ENCODE measurements at regions of chr3 and their contacts with region 1.

Region 1: GRCh38 chr3:33798411-33799201 is at the start of gene PDCD6IP:
- DNase-seq: peak; percentile 87 to 92 (median 89)
- H3K4me3 ChIP-seq: peak within 1 kb of the TSS; percentile 85 to 92
- H3K4me3 Mint-ChIP-seq: peak within 1 kb of the TSS; percentile 97 to 100 (median 99)
- H3K27ac ChIP-seq: peak within 1 kb of the TSS; percentile 82
- H3K27ac Mint-ChIP-seq: peak within 1 kb of the TSS; percentile 86 to 99 (median 98)
- H3K4me1 ChIP-seq: peaks cover 58% of the 10 kb centered on the region
- H3K4me1 Mint-ChIP-seq: peaks cover 33 to 67% (median 54%) of the 10 kb centered on the region in 4 donors
- H3K27me3 ChIP-seq: no peaks in the 10 kb centered on the region
- H3K27me3 Mint-ChIP-seq: no peaks in the 10 kb centered on the region
- total RNA-seq, gene PDCD6IP: 222 to 237 TPM

Region 2: GRCh38 chr3:33113772-33114621 is 684.6 kb before region 1 on chr3 and contains the start of gene CRTAP:
- CTCF ChIA-PET with region 1: no interaction called
- POLR2A ChIA-PET with region 1: no interaction called
- intact Hi-C with region 1: loop called (anchors 5 kb)
- DNase-seq: peak; percentile 85 to 88 (median 87)
- H3K4me3 ChIP-seq: peak within 1 kb of the TSS; percentile 71 to 83
- H3K4me3 Mint-ChIP-seq: peak within 1 kb of the TSS; percentile 83 to 92 (median 89)
- H3K27ac ChIP-seq: peak within 1 kb of the TSS; percentile 55
- H3K27ac Mint-ChIP-seq: peak within 1 kb of the TSS; percentile 75 to 94 (median 91)
- H3K4me1 ChIP-seq: peaks cover 42% of the 10 kb centered on the region
- H3K4me1 Mint-ChIP-seq: peaks cover 32 to 65% (median 48%) of the 10 kb centered on the region in 4 donors
- H3K27me3 ChIP-seq: no peaks in the 10 kb centered on the region
- H3K27me3 Mint-ChIP-seq: no peaks in the 10 kb centered on the region
- total RNA-seq, gene CRTAP: 75.4 to 84.4 TPM

Region 3: GRCh38 chr3:33544126-33544525 is 254.5 kb before region 1 on chr3:
- CTCF ChIA-PET with region 1: no interaction called
- POLR2A ChIA-PET with region 1: no interaction called
- intact Hi-C with region 1: no loop called
- DNase-seq: no peak
- H3K4me3 ChIP-seq: no peak overlapping the region
- H3K4me3 Mint-ChIP-seq: no peak overlapping the region
- H3K27ac ChIP-seq: no peak overlapping the region
- H3K27ac Mint-ChIP-seq: no peak overlapping the region
- H3K4me1 ChIP-seq: no peaks in the 10 kb centered on the region
- H3K4me1 Mint-ChIP-seq: no peaks in the 10 kb centered on the region
- H3K27me3 ChIP-seq: no peaks in the 10 kb centered on the region
- H3K27me3 Mint-ChIP-seq: no peaks in the 10 kb centered on the region

Region 4: GRCh38 chr3:33636125-33636850 is 162.3 kb before region 1 on chr3:
- CTCF ChIA-PET with region 1: no interaction called
- POLR2A ChIA-PET with region 1: no interaction called
- intact Hi-C with region 1: no loop called
- DNase-seq: peak; percentile 9 to 31 (median 22)
- H3K4me3 ChIP-seq: no peak overlapping the region
- H3K4me3 Mint-ChIP-seq: no peak overlapping the region
- H3K27ac ChIP-seq: no peak overlapping the region
- H3K27ac Mint-ChIP-seq: no peak overlapping the region
- H3K4me1 ChIP-seq: no peaks in the 10 kb centered on the region
- H3K4me1 Mint-ChIP-seq: no peaks in the 10 kb centered on the region
- H3K27me3 ChIP-seq: no peaks in the 10 kb centered on the region
- H3K27me3 Mint-ChIP-seq: no peaks in the 10 kb centered on the region

Region 5: GRCh38 chr3:33717866-33718594 is 80.6 kb before region 1 on chr3 and contains the start of gene CLASP2:
- CTCF ChIA-PET with region 1: interaction called, 3 read pairs
- POLR2A ChIA-PET with region 1: interaction called, 9 read pairs
- intact Hi-C with region 1: loop called (anchors 1 kb)
- DNase-seq: peak; percentile 86 to 89 (median 88)
- H3K4me3 ChIP-seq: peak within 1 kb of the TSS; percentile 53 to 88
- H3K4me3 Mint-ChIP-seq: peak within 1 kb of the TSS in 6 of 8 donors; percentile 92 to 99 (median 98)
- H3K27ac ChIP-seq: peak within 1 kb of the TSS; percentile 82
- H3K27ac Mint-ChIP-seq: peak within 1 kb of the TSS in 6 of 7 donors; percentile 96 to 99 (median 99)
- H3K4me1 ChIP-seq: peaks cover 27% of the 10 kb centered on the region
- H3K4me1 Mint-ChIP-seq: peaks cover 8 to 20% (median 13%) of the 10 kb centered on the region in 4 donors
- H3K27me3 ChIP-seq: no peaks in the 10 kb centered on the region
- H3K27me3 Mint-ChIP-seq: no peaks in the 10 kb centered on the region
- total RNA-seq, gene CLASP2: 62.1 to 63.0 TPM

Region 6: GRCh38 chr3:33810545-33810944 is 11.9 kb after region 1 on chr3:
- CTCF ChIA-PET with region 1: interaction called, 10 read pairs
- POLR2A ChIA-PET with region 1: interaction called, 7 read pairs
- intact Hi-C with region 1: no loop called
- DNase-seq: no peak
- H3K4me3 ChIP-seq: no peak overlapping the region
- H3K4me3 Mint-ChIP-seq: no peak overlapping the region
- H3K27ac ChIP-seq: no peak overlapping the region
- H3K27ac Mint-ChIP-seq: peak overlapping the region in 5 of 7 donors; percentile 15 to 64 (median 22)
- H3K4me1 ChIP-seq: peaks cover 52% of the 10 kb centered on the region
- H3K4me1 Mint-ChIP-seq: peaks cover 41 to 68% (median 58%) of the 10 kb centered on the region in 4 donors
- H3K27me3 ChIP-seq: no peaks in the 10 kb centered on the region
- H3K27me3 Mint-ChIP-seq: no peaks in the 10 kb centered on the region

Region 7: DNA sequence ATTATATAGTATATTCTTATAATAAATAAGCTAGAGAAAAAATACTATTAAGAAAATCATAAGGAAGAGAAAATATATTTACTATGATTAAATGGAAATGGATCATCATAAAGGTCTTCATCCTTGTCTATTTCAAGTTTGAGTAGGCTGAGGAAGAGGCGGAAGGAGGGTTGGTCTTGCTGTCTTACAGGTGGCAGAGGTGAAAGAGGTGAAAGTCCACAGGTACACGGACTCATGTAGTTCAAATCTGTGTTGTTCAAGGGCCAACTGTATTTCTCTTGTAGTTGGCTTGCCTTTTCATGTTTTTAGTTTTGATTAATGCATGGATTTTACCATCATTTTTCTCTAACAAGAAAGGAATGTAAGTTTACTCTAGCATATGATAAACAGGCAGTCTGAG is 41.6 kb after region 1 on chr3:
- CTCF ChIA-PET with region 1: no interaction called
- POLR2A ChIA-PET with region 1: no interaction called
- intact Hi-C with region 1: no loop called
- DNase-seq: no peak
- H3K4me3 ChIP-seq: no peak overlapping the region
- H3K4me3 Mint-ChIP-seq: no peak overlapping the region
- H3K27ac ChIP-seq: no peak overlapping the region
- H3K27ac Mint-ChIP-seq: peak overlapping the region in 1 of 7 donors; percentile 42
- H3K4me1 ChIP-seq: no peaks in the 10 kb centered on the region
- H3K4me1 Mint-ChIP-seq: peaks cover 0 to under 1% (median 0%) of the 10 kb centered on the region in 4 donors
- H3K27me3 ChIP-seq: no peaks in the 10 kb centered on the region
- H3K27me3 Mint-ChIP-seq: no peaks in the 10 kb centered on the region

Measured in CD4-positive, alpha-beta memory T cell (primary cell).